WTC11 (cell line): ENCODE measurements at regions of chr17 and their contacts with region 1.

Region 1: GRCh38 chr17:14330486-14331029 is 29.7 kb downstream of the HS3ST3B1 start:
- DNase-seq: peak; percentile 25
- ATAC-seq: peak; percentile 39
- H3K4me3 Mint-ChIP-seq: peak overlapping the region; percentile 58
- H3K27ac Mint-ChIP-seq: peak overlapping the region; percentile 94
- H3K4me1 Mint-ChIP-seq: peaks cover 85% of the 10 kb centered on the region
- H3K27me3 Mint-ChIP-seq: peaks cover 15% of the 10 kb centered on the region
- CTCF ChIP-seq: no peak

Region 2: GRCh38 chr17:14080847-14081251 is 249.7 kb before region 1 on chr17:
- CTCF ChIA-PET with region 1: no interaction called
- POLR2A ChIA-PET with region 1: no interaction called
- DNase-seq: no peak
- ATAC-seq: no peak
- H3K4me3 Mint-ChIP-seq: no peak overlapping the region
- H3K27ac Mint-ChIP-seq: peak overlapping the region; percentile 12
- H3K4me1 Mint-ChIP-seq: no peaks in the 10 kb centered on the region
- H3K27me3 Mint-ChIP-seq: no peaks in the 10 kb centered on the region
- CTCF ChIP-seq: no peak

Region 3: GRCh38 chr17:14300575-14301278 is 29.8 kb before region 1 on chr17 and contains the start of gene HS3ST3B1:
- CTCF ChIA-PET with region 1: interaction called, 24 read pairs
- POLR2A ChIA-PET with region 1: interaction called, 11 read pairs
- DNase-seq: peak; percentile 100
- ATAC-seq: peak; percentile 86
- H3K4me3 Mint-ChIP-seq: peak within 1 kb of the TSS; percentile 89
- H3K27ac Mint-ChIP-seq: no peak within 1 kb of the TSS
- H3K4me1 Mint-ChIP-seq: peaks cover 65% of the 10 kb centered on the region
- H3K27me3 Mint-ChIP-seq: peaks cover 89% of the 10 kb centered on the region
- CTCF ChIP-seq: no peak
- total RNA-seq, gene HS3ST3B1: 12.3 to 22.3 TPM (median 13.1 TPM) in 3 replicates

Region 4: DNA sequence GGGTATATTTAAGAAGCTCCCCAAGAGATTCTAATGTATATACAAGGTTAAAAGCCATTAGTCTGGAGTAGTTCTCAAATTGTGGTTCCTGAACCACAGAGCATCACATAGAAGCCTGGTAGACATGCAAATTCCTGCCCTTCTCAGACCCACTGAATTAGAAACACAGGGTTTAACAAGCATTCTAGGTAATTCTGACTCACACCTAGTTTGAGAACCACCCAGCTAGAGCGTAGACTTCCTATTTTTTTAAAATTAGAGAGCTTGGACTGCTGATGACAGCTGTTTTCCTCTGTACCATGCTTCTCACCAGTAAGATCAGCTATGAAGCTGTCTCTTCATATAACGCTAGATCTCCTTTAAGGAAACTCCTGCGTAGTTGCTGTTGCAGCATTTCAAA is 20.9 kb after region 1 on chr17:
- CTCF ChIA-PET with region 1: no interaction called
- POLR2A ChIA-PET with region 1: no interaction called
- DNase-seq: no peak
- ATAC-seq: no peak
- H3K4me3 Mint-ChIP-seq: no peak overlapping the region
- H3K27ac Mint-ChIP-seq: no peak overlapping the region
- H3K4me1 Mint-ChIP-seq: peaks cover 12% of the 10 kb centered on the region
- H3K27me3 Mint-ChIP-seq: no peaks in the 10 kb centered on the region; the same call in 1 of the 2 replicates
- CTCF ChIP-seq: no peak

Region 5: DNA sequence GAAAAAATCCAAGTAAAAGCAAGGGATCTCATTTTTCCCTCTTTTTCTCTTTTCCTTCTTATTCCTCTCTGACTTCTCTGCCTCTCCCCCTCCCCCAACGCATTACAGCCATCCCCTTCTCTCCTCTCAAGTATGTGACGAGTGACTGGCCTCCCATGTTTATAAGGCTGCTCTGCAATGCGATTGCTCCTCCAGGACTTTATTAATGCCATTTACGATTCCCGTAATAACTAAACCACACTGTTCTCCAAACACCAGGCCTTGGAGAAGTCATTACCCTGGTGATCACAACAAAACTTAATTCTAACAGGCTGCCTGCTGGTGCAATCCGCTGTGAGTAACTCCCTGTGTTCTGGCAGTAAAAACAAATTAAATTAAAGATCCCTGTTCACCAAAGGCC is 59.1 kb after region 1 on chr17:
- CTCF ChIA-PET with region 1: no interaction called
- POLR2A ChIA-PET with region 1: no interaction called
- DNase-seq: peak; percentile 16
- ATAC-seq: no peak; the same call in 1 of the 2 replicates
- H3K4me3 Mint-ChIP-seq: no peak overlapping the region
- H3K27ac Mint-ChIP-seq: no peak overlapping the region
- H3K4me1 Mint-ChIP-seq: peaks cover 15% of the 10 kb centered on the region
- H3K27me3 Mint-ChIP-seq: no peaks in the 10 kb centered on the region; the same call in 1 of the 2 replicates
- CTCF ChIP-seq: no peak

Region 6: DNA sequence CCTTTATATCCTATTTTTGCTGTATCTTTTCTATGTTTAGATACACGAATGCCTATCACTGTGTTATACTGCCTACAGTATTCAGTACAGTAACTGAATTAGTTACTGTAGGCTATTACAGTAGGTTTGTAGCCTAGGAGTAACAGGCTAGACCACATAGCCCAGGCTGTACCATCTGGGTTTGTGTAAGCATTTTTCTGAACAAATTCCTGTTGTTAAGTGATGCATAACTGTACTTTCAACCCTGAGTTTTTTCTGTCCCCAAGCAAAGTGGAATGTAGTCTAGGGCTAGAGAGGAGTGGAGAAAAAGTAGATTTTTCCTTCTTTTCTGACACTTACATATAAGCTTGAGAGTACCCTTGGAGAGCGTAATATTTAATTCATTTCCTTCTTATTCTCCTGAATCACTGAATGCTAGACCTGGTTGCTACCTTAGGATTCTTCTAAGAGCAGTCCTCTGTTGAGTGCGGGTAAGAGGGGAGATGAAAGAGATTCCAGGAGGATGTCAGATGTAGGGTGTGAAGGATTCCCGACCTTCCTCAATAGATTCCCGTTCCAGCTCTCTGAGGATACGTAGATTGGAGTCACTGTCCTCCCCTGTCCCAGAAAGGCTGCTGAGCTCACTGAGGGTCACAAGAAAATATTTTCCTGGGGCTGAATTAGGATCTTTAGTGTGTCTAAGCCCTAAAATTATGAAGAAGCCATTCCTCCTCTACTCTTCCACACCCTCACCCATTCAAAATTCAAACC is 252.6 kb after region 1 on chr17:
- CTCF ChIA-PET with region 1: no interaction called
- POLR2A ChIA-PET with region 1: interaction called, 10 read pairs
- DNase-seq: no peak
- ATAC-seq: no peak
- H3K4me3 Mint-ChIP-seq: no peak overlapping the region
- H3K27ac Mint-ChIP-seq: no peak overlapping the region
- H3K4me1 Mint-ChIP-seq: peaks cover 22% of the 10 kb centered on the region
- H3K27me3 Mint-ChIP-seq: no peaks in the 10 kb centered on the region
- CTCF ChIP-seq: no peak